ENCODE measurements at regions of chr6 and their contacts with region 1.

Region 1: GRCh38 chr6:37381579-37381978 is 27.8 kb downstream of the RNF8 start:
- DNase-seq: peak; percentile 68
- H3K4me3 ChIP-seq: no peak overlapping the region
- H3K27ac ChIP-seq: no peak overlapping the region
- H3K4me1 ChIP-seq: peaks cover 6% of the 10 kb centered on the region
- H3K27me3 ChIP-seq: no peaks in the 10 kb centered on the region
- CTCF ChIP-seq: peak; percentile 84 to 87

Region 2: DNA sequence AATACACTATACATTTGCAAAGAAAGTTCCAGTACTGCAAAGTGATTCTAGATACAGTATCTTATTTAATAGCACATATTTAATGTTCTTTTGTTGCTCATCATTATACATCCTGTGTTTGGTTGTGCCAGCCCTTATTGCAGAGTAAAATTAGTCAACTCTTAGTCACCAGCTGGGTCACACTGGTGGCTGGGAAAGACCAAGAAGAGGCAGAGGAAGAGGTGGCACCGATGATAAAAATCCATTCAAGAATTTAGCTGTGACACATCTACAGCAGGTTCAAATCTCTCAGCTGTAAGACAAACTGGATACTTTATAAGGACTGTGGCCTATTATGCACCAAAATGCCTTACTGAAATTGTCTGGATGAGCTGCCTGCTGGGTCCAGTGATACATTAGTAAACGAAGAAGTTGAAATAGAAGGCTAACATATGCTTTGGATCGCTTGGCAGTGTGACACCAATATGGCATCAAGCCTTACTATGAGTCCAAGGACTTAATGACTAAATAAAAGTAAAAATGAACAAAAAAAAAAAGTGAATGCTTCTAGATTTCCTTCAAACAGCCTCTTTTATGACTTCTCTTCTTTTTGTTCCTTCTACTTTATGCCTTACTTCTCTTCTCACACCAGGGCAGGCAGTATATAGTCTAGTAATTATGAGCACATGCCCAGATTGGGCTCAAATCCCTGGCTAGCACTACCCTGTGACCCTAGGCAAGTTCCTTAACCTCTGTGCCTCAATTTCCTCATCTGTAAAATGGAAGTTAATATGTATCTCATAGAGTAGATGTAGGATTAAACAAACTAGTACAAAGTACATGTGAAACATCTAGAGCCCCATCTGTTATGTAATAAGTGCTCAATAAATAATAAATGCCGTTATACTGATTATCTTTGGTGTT is 57.2 kb before region 1 on chr6:
- CTCF ChIA-PET with region 1: no interaction called
- dilution Hi-C with region 1: no loop called
- in situ Hi-C with region 1: no loop called
- intact Hi-C with region 1: loop called (anchors 1 kb)
- DNase-seq: peak; percentile 78
- H3K4me3 ChIP-seq: no peak overlapping the region
- H3K27ac ChIP-seq: no peak overlapping the region
- H3K4me1 ChIP-seq: peaks cover 15% of the 10 kb centered on the region
- H3K27me3 ChIP-seq: no peaks in the 10 kb centered on the region
- CTCF ChIP-seq: no peak

Region 3: DNA sequence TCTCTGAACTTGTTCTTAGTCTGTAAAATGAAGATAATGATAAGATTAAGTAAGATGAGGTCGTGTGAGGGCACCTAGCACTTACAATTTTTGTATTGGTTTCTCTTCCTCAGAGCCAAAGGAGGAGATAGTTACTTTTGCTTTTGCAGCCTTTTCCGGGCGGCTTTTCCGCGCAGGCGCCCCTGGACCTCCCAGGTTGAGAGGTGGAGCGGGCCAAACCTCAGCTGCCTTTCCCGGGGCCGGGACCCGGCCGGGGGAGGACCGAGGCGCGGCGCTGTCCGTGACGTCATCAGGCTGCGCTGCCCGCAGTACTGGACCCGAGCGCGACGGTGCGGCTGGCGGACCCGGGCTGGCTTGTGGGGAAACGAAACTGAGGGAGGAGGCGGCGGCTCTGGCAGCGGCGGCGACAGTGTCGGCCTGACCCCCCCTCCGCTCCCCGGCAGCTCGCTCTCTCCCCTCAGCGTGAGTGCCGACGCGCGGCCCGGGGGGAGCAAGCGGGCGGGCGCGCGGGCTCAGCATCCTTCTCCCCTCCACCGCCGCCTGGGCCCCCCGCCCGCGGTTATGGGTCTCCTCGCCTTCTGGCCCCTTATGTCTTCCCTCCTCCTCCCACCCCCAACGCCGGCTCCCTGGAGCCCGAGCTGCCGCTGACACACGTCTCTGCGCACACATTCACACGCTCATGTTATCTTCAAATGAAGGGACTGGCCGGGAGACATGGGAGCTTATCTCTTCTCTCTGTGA is 51.5 kb after region 1 on chr6 and contains the start of gene CMTR1:
- CTCF ChIA-PET with region 1: no interaction called
- dilution Hi-C with region 1: no loop called
- in situ Hi-C with region 1: no loop called
- intact Hi-C with region 1: loop called (anchors 1 kb)
- DNase-seq: peak; percentile 84
- H3K4me3 ChIP-seq: peak within 1 kb of the TSS; percentile 72 to 83 (median 82)
- H3K27ac ChIP-seq: peak within 1 kb of the TSS; percentile 53
- H3K4me1 ChIP-seq: peaks cover 6% of the 10 kb centered on the region
- H3K27me3 ChIP-seq: no peaks in the 10 kb centered on the region
- CTCF ChIP-seq: no peak
- total RNA-seq, gene CMTR1: 23.2 to 31.8 TPM

Region 4: DNA sequence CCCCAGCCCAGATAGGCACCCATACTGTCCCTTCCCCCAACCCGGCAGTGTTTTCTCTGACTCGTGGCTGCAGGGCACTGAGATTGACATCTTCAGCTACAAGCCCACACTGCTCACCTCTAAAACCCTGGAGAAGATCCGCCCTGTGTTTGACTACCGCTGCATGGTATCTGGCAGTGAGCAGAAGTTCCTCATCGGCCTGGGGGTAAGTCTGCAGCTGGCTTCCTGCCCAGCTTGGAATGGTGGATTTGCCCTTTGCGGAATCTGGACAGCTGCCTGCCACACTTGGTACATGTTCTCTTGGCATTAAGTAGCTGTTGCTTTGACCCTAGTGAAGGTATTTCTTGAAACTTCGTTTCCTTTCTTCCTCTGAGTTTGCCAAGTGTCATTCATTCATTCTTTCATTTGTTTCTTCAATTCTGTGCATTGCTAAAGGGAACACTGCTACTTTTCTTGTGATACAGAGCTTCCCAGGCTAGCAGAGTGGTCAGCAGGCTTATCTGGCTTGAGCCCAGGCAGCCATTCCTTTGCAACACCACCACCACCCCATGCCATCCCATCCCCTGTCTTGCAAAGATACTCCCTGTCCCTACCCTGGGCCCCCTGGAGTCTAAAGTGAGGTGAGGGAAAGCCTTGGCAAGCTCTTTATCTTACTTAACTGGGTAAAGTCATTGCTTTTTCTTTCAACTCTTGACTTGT is 92.0 kb after region 1 on chr6:
- CTCF ChIA-PET with region 1: no interaction called
- dilution Hi-C with region 1: no loop called
- in situ Hi-C with region 1: no loop called
- intact Hi-C with region 1: loop called (anchors 5 kb)
- DNase-seq: peak; percentile 82
- H3K4me3 ChIP-seq: no peak overlapping the region
- H3K27ac ChIP-seq: no peak overlapping the region
- H3K4me1 ChIP-seq: peaks cover 15% of the 10 kb centered on the region
- H3K27me3 ChIP-seq: no peaks in the 10 kb centered on the region
- CTCF ChIP-seq: no peak

Region 5: DNA sequence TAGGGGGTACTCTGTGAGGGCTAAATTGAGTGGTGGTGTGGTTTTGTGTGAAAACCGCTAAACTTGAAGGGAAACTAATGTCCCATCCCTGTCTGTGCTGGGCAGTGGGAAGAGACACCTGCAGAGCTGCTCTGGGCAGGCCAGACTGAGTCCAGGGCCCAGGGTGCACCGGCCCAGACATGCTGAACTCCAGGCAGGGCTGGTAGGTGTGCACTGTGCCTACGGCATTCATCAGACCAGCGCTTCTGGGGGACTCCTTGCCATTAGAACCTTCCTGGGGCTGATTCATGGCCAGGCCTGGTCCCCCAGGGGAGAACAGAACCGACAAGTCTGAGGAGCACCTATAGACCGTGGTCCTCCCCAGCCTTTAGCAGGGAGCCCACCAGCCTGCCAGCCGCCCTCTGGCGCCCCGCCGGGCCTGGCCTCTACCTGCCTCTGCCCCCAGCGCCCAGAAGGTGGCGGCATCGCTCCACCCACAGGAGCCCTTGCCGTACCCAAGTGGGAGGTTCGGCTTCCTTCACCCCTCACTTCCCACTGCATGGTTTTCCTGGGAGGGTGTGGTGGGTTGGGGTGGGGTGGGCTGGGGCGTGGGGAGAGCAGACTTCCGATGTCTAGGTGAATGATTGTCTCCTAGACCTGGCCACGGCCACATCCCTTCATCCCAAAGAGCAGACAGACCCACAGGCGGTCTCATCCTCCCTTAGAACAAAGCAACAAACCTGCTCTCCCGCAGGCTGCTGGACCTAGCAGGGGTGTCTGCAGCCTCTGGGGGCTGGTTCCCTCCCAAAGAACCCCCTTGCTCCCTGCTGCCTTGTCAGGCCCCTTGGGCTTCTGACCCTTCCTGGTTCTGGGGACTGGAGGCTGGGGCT is 102.6 kb after region 1 on chr6:
- CTCF ChIA-PET with region 1: no interaction called
- dilution Hi-C with region 1: no loop called
- in situ Hi-C with region 1: no loop called
- intact Hi-C with region 1: loop called (anchors 2 kb)
- DNase-seq: peak; percentile 20
- H3K4me3 ChIP-seq: no peak overlapping the region
- H3K27ac ChIP-seq: no peak overlapping the region
- H3K4me1 ChIP-seq: no peaks in the 10 kb centered on the region
- H3K27me3 ChIP-seq: no peaks in the 10 kb centered on the region
- CTCF ChIP-seq: peak; percentile 81 to 87

Measured in mammary epithelial cell (primary cell).